IMR-90 (cell line): ENCODE measurements at regions of chr2 and their contacts with region 1.

Region 1: DNA sequence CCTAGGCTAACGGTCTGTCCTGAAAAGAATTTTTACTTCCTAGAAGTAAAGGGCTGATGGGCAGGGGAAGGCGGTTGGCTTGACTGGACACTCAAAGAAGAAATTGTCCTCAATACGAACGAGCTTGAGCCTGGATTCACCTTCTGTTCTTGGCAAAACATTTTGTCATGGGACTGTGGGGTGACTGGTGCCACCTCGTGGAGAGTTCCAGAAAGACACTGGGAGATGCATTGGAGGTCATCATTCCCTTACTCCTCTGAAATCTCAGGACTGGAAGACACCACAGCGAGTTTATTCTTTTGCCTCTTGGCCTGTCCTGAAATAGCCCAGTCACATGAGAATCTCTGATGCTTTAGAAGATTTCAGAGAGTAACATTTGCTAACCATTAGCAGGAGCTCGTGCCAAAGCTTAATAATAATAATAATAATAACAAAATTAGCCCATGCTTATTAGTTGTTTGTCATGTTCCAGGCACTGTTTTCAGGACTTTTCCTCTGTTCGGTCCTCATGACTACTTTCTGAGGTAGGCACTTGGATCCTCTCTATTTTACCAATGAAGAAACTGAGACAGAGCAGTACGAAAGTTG is 44.5 kb downstream of the TMEM182 start:
- DNase-seq: peak; percentile 65
- ATAC-seq: peak; percentile 99
- H3K4me3 ChIP-seq: no peak overlapping the region
- H3K27ac ChIP-seq: no peak overlapping the region
- H3K4me1 ChIP-seq: no peaks in the 10 kb centered on the region
- H3K27me3 ChIP-seq: no peaks in the 10 kb centered on the region
- CTCF ChIP-seq: peak; percentile 81
- POLR2A ChIP-seq: no peak
- RAD21 ChIP-seq: peak; percentile 66

Region 2: GRCh38 chr2:102753563-102754159 is 52.7 kb before region 1 on chr2:
- CTCF ChIA-PET with region 1: interaction called, 22 read pairs
- POLR2A ChIA-PET with region 1: no interaction called
- dilution Hi-C with region 1: no loop called
- in situ Hi-C with region 1: no loop called
- intact Hi-C with region 1: loop called (anchors 1 kb)
- DNase-seq: peak; percentile 53
- ATAC-seq: peak; percentile 73
- H3K4me3 ChIP-seq: no peak overlapping the region
- H3K27ac ChIP-seq: no peak overlapping the region
- H3K4me1 ChIP-seq: no peaks in the 10 kb centered on the region; the same call in 1 of the 2 replicates
- H3K27me3 ChIP-seq: no peaks in the 10 kb centered on the region; the same call in 1 of the 2 replicates
- CTCF ChIP-seq: peak; percentile 71
- POLR2A ChIP-seq: no peak
- RAD21 ChIP-seq: peak; percentile 27; the same call in 1 of the 2 replicates

Region 3: DNA sequence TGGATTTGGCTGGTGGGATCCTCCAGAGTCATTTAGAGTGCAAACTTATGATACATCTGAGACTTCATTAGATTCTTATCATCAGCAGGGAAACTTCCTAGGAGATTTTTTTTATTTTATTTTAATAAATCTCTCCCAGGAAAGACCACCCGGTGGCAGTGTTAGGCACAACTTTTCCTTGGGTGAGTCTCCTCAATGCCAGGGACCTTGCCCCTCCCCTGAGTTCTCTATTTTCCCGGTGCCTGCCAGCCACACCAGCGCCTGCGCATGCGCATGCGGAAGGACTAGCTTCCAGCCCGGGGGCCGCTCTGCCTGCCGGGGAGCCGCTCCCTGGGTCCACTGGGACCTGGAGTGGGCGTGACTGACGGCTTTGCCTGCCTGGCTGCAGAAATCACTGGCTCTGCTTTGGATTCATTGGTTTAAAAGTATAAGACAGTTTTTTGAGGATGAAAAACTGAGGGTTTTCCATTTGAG is 42.1 kb after region 1 on chr2:
- CTCF ChIA-PET with region 1: no interaction called
- POLR2A ChIA-PET with region 1: no interaction called
- dilution Hi-C with region 1: no loop called
- in situ Hi-C with region 1: no loop called
- intact Hi-C with region 1: no loop called
- DNase-seq: peak; percentile 3
- ATAC-seq: peak; percentile 81
- H3K4me3 ChIP-seq: no peak overlapping the region
- H3K27ac ChIP-seq: no peak overlapping the region
- H3K4me1 ChIP-seq: no peaks in the 10 kb centered on the region
- H3K27me3 ChIP-seq: peaks cover 1% of the 10 kb centered on the region; the same call in 1 of the 2 replicates
- CTCF ChIP-seq: no peak
- POLR2A ChIP-seq: no peak
- RAD21 ChIP-seq: no peak